ENCODE measurements at regions of chr2 and their contacts with region 1.

Region 1: GRCh38 chr2:96305091-96305978 is at the start of gene SNRNP200:
- DNase-seq: peak; percentile 30 to 91
- H3K4me3 ChIP-seq: peak within 1 kb of the TSS; percentile 84 to 85
- H3K27ac ChIP-seq: peak within 1 kb of the TSS; percentile 73 to 82
- H3K4me1 ChIP-seq: peaks cover 4 to 13% of the 10 kb centered on the region in 2 donors
- H3K27me3 ChIP-seq: no peaks in the 10 kb centered on the region
- CTCF ChIP-seq: no peak
- total RNA-seq, gene SNRNP200: 57.4 TPM

Region 2: GRCh38 chr2:96353032-96353561 is 47.8 kb after region 1 on chr2:
- intact Hi-C with region 1: loop called (anchors 2 kb)
- DNase-seq: peak in 1 of 2 donors; percentile 82
- H3K4me3 ChIP-seq: peak overlapping the region; percentile 4 to 37
- H3K27ac ChIP-seq: peak overlapping the region; percentile 78 to 84
- H3K4me1 ChIP-seq: peaks cover 0 to 19% of the 10 kb centered on the region in 2 donors
- H3K27me3 ChIP-seq: no peaks in the 10 kb centered on the region
- CTCF ChIP-seq: no peak

Measured in ascending aorta (tissue), 2 donors.